Activated B cell treated with CpG ODN at 0.5 μM for 24 hours (primary cell): ENCODE measurements at regions of chr17 and their contacts with region 1.

Region 1: GRCh38 chr17:81394921-81395599 is at the start of gene BAHCC1:
- DNase-seq: peak; percentile 70
- ATAC-seq: peak; percentile 92
- H3K4me3 Mint-ChIP-seq: peak within 1 kb of the TSS; percentile 75
- H3K27ac Mint-ChIP-seq: peak within 1 kb of the TSS; percentile 76
- H3K4me1 Mint-ChIP-seq: peaks cover 26% of the 10 kb centered on the region
- H3K27me3 Mint-ChIP-seq: peaks cover 41% of the 10 kb centered on the region
- CTCF ChIP-seq: no peak
- total RNA-seq, gene BAHCC1: 0.13 and 0.42 TPM in 2 replicates

Region 2: GRCh38 chr17:79810130-79811010 is 1584.7 kb before region 1 on chr17:
- CTCF ChIA-PET with region 1: no interaction called
- POLR2A ChIA-PET with region 1: no interaction called
- intact Hi-C with region 1: loop called (anchors 5 kb)
- DNase-seq: no peak
- ATAC-seq: peak; percentile 86
- H3K4me3 Mint-ChIP-seq: peak overlapping the region; percentile 15
- H3K27ac Mint-ChIP-seq: peak overlapping the region; percentile 46
- H3K4me1 Mint-ChIP-seq: peaks cover 36% of the 10 kb centered on the region
- H3K27me3 Mint-ChIP-seq: peaks cover 51% of the 10 kb centered on the region
- CTCF ChIP-seq: no peak

Region 3: GRCh38 chr17:81346090-81346907 is 48.8 kb before region 1 on chr17:
- CTCF ChIA-PET with region 1: no interaction called
- POLR2A ChIA-PET with region 1: interaction called, 3 read pairs
- intact Hi-C with region 1: loop called (anchors 1 kb)
- DNase-seq: peak; percentile 87
- ATAC-seq: peak; percentile 96
- H3K4me3 Mint-ChIP-seq: peak overlapping the region; percentile 74
- H3K27ac Mint-ChIP-seq: no peak overlapping the region
- H3K4me1 Mint-ChIP-seq: peaks cover 20% of the 10 kb centered on the region
- H3K27me3 Mint-ChIP-seq: peaks cover 24% of the 10 kb centered on the region
- CTCF ChIP-seq: no peak